Caco-2 (cell line): ENCODE measurements at regions of chr4 and their contacts with region 1.

Region 1: DNA sequence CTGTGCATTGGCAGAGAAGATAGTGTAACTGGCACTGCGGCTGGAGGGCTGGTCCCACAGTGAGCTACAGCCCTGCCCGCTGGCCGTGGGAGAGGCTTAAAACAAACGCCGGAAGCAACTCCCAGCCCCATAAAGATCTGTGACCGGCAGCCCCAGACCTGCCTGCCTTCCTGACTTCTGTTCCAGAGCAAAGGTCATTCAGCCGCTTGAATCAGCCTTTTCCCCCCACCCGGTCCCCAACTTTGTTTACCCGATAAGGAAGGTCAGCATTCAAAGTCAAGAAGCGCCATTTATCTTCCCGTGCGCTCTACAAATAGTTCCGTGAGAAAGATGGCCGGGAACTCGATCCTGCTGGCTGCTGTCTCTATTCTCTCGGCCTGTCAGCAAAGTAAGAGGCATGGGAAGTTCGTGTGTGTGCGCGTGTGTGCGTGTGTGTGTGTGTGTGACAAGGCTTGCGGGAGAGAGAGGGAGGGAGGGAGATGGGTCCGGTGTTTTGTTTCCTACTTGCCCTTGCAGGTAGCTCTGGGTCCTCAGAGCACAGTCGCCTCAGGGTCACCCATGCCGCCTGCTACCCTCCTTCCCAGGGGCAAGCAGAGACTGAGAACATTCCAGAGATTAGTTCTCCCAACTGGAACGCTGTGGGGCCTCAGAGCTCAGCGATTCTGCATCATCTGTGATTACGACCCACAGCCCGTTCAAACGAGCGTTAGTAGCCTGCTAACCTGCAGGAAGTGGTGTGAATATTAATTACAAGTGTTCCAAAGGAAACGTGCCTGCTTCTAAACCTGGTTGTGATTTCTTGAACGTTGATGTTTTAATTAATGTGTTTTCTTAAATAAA is at the start of gene MGST2:
- DNase-seq: peak; percentile 92 to 97
- H3K4me3 ChIP-seq: peak within 1 kb of the TSS; percentile 52
- H3K4me3 Mint-ChIP-seq: peak within 1 kb of the TSS; percentile 90
- H3K27ac Mint-ChIP-seq: peak within 1 kb of the TSS; percentile 94
- H3K4me1 ChIP-seq: peaks cover 83% of the 10 kb centered on the region
- H3K4me1 Mint-ChIP-seq: peaks cover 53% of the 10 kb centered on the region
- H3K27me3 ChIP-seq: no peaks in the 10 kb centered on the region
- H3K27me3 Mint-ChIP-seq: no peaks in the 10 kb centered on the region
- CTCF ChIP-seq: no peak
- total RNA-seq, gene MGST2: 81.7 and 88.4 TPM in 2 replicates

Region 2: GRCh38 chr4:139625482-139625881 is 40.4 kb before region 1 on chr4:
- CTCF ChIA-PET with region 1: no interaction called
- POLR2A ChIA-PET with region 1: interaction called, 3 read pairs
- intact Hi-C with region 1: loop called (anchors 1 kb)
- DNase-seq: no peak
- H3K4me3 ChIP-seq: no peak overlapping the region
- H3K4me3 Mint-ChIP-seq: no peak overlapping the region
- H3K27ac Mint-ChIP-seq: peak overlapping the region; percentile 88
- H3K4me1 ChIP-seq: peaks cover 32% of the 10 kb centered on the region
- H3K4me1 Mint-ChIP-seq: peaks cover 30% of the 10 kb centered on the region
- H3K27me3 ChIP-seq: no peaks in the 10 kb centered on the region
- H3K27me3 Mint-ChIP-seq: no peaks in the 10 kb centered on the region
- CTCF ChIP-seq: no peak

Region 3: GRCh38 chr4:139686130-139686529 is 20.2 kb after region 1 on chr4:
- CTCF ChIA-PET with region 1: no interaction called
- POLR2A ChIA-PET with region 1: interaction called, 5 read pairs
- intact Hi-C with region 1: loop called (anchors 1 kb)
- DNase-seq: peak in 1 of 2 experiments; percentile 53
- H3K4me3 ChIP-seq: no peak overlapping the region
- H3K4me3 Mint-ChIP-seq: peak overlapping the region; percentile 50
- H3K27ac Mint-ChIP-seq: peak overlapping the region; percentile 81
- H3K4me1 ChIP-seq: peaks cover 73% of the 10 kb centered on the region
- H3K4me1 Mint-ChIP-seq: peaks cover 65% of the 10 kb centered on the region
- H3K27me3 ChIP-seq: no peaks in the 10 kb centered on the region
- H3K27me3 Mint-ChIP-seq: no peaks in the 10 kb centered on the region
- CTCF ChIP-seq: no peak

Region 4: GRCh38 chr4:139692309-139693012 is 26.6 kb after region 1 on chr4:
- CTCF ChIA-PET with region 1: interaction called, 11 read pairs
- POLR2A ChIA-PET with region 1: interaction called, 4 read pairs
- intact Hi-C with region 1: loop called (anchors 1 kb)
- DNase-seq: peak; percentile 60 to 64
- H3K4me3 ChIP-seq: no peak overlapping the region
- H3K4me3 Mint-ChIP-seq: peak overlapping the region; percentile 60
- H3K27ac Mint-ChIP-seq: peak overlapping the region; percentile 93
- H3K4me1 ChIP-seq: peaks cover 87% of the 10 kb centered on the region
- H3K4me1 Mint-ChIP-seq: peaks cover 40% of the 10 kb centered on the region
- H3K27me3 ChIP-seq: no peaks in the 10 kb centered on the region
- H3K27me3 Mint-ChIP-seq: no peaks in the 10 kb centered on the region
- CTCF ChIP-seq: peak; percentile 46 to 48

Region 5: GRCh38 chr4:139798456-139798855 is 132.5 kb after region 1 on chr4:
- CTCF ChIA-PET with region 1: no interaction called
- POLR2A ChIA-PET with region 1: no interaction called
- intact Hi-C with region 1: no loop called
- DNase-seq: no peak
- H3K4me3 ChIP-seq: no peak overlapping the region
- H3K4me3 Mint-ChIP-seq: no peak overlapping the region
- H3K27ac Mint-ChIP-seq: no peak overlapping the region
- H3K4me1 ChIP-seq: peaks cover 7% of the 10 kb centered on the region
- H3K4me1 Mint-ChIP-seq: peaks cover 7% of the 10 kb centered on the region
- H3K27me3 ChIP-seq: no peaks in the 10 kb centered on the region
- H3K27me3 Mint-ChIP-seq: no peaks in the 10 kb centered on the region
- CTCF ChIP-seq: no peak

Region 6: GRCh38 chr4:139852612-139853269 is 186.8 kb after region 1 on chr4:
- CTCF ChIA-PET with region 1: no interaction called
- POLR2A ChIA-PET with region 1: no interaction called
- intact Hi-C with region 1: loop called (anchors 5 kb)
- DNase-seq: no peak
- H3K4me3 ChIP-seq: no peak overlapping the region
- H3K4me3 Mint-ChIP-seq: no peak overlapping the region
- H3K27ac Mint-ChIP-seq: no peak overlapping the region
- H3K4me1 ChIP-seq: peaks cover 75% of the 10 kb centered on the region
- H3K4me1 Mint-ChIP-seq: peaks cover 42% of the 10 kb centered on the region
- H3K27me3 ChIP-seq: no peaks in the 10 kb centered on the region
- H3K27me3 Mint-ChIP-seq: no peaks in the 10 kb centered on the region
- CTCF ChIP-seq: no peak

Region 7: DNA sequence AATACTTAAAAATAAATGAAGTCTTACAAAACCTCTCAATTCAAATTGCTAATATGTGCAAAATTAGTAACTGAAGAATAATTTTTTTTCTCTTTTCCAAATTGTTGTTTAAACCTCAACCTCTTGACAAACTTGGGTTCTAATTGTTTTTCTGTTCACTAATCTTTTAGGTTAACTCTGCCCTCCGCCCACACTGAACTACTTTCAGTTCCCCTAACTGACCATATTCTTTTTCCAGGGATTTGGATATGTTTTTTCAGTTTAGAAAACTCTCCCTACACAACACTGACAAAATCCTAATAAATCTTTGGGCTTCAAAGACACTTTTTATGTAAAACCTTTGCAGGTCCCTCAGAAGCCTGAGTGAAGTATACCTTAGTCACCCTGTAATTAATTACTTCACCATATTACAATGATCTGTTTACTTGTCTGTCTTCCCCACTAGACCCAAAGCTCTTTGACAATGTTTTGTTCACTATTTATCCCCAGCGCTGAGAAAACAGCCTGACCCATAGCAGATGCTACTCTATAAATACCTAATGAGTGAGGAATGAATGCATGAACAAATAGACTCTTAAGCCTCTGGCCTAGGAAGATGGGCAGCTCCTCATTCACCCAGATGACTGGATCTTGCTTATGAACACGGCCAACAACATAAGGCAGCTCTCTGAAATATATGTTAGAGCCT is 353.2 kb after region 1 on chr4:
- CTCF ChIA-PET with region 1: no interaction called
- POLR2A ChIA-PET with region 1: no interaction called
- intact Hi-C with region 1: loop called (anchors 1 kb)
- DNase-seq: peak; percentile 44 to 52
- H3K4me3 ChIP-seq: no peak overlapping the region
- H3K4me3 Mint-ChIP-seq: peak overlapping the region; percentile 60
- H3K27ac Mint-ChIP-seq: peak overlapping the region; percentile 66
- H3K4me1 ChIP-seq: peaks cover 50% of the 10 kb centered on the region
- H3K4me1 Mint-ChIP-seq: peaks cover 54% of the 10 kb centered on the region
- H3K27me3 ChIP-seq: no peaks in the 10 kb centered on the region
- H3K27me3 Mint-ChIP-seq: no peaks in the 10 kb centered on the region
- CTCF ChIP-seq: no peak

Region 8: GRCh38 chr4:140037357-140038030 is 371.6 kb after region 1 on chr4:
- CTCF ChIA-PET with region 1: no interaction called
- POLR2A ChIA-PET with region 1: no interaction called
- intact Hi-C with region 1: loop called (anchors 5 kb)
- DNase-seq: peak; percentile 68 to 80
- H3K4me3 ChIP-seq: no peak overlapping the region
- H3K4me3 Mint-ChIP-seq: peak overlapping the region; percentile 8
- H3K27ac Mint-ChIP-seq: peak overlapping the region; percentile 16
- H3K4me1 ChIP-seq: peaks cover 44% of the 10 kb centered on the region
- H3K4me1 Mint-ChIP-seq: peaks cover 44% of the 10 kb centered on the region
- H3K27me3 ChIP-seq: no peaks in the 10 kb centered on the region
- H3K27me3 Mint-ChIP-seq: no peaks in the 10 kb centered on the region
- CTCF ChIP-seq: no peak